Activated CD4-positive, alpha-beta T cell treated with anti-CD3 and anti-CD28 coated beads, Interleukin-2, amount 10 ng/mL, durations not matched to agents 7 days and 5 days (primary cell): ENCODE measurements at regions of chr15 and their contacts with region 1.

Region 1: DNA sequence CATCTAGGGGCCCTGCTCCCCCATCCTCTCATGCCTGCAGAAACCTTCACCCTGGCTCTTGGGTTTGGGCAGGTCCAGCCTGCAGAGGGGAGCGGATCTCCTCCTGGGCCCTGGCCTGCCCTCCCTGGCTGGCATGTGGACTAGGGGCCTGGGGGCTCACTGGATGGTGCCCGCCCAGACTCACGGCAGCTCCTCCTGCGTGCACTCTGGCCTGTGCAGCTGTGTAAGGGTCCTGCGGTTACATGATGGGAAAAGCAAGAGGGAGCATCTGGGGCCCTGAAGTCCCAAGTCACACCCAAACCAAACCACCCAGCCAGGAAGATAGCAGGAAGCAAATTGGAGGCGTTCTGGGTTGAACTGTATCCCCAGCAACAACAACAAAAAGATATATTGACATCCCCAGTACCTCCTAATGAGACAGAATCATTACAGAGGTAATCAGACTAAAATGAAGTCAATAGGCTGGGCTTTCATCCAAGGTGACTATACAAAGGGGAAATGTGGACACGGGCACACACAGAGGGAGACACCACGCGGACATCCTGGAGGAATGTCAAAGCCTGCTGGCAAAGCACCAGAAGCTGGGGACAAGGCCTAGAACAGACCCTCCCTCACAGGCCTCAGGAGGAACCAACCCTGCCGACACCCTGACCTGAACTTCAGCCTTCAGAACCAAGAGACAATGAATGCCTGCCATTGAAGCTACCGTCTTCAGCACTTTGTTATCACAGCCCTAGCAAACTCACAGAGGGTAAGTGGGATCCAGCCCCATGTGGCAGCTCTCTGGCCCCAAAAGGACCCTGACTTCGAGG is 10.4 kb upstream of the CLK3 start:
- DNase-seq: no peak
- H3K4me3 Mint-ChIP-seq: no peak overlapping the region
- H3K27ac Mint-ChIP-seq: no peak overlapping the region
- H3K4me1 Mint-ChIP-seq: no peaks in the 10 kb centered on the region
- H3K27me3 Mint-ChIP-seq: no peaks in the 10 kb centered on the region

Region 2: GRCh38 chr15:74615508-74616365 is 10.5 kb after region 1 on chr15 and contains the start of gene CLK3:
- CTCF ChIA-PET with region 1: interaction called, 19 read pairs
- POLR2A ChIA-PET with region 1: no interaction called
- DNase-seq: peak; percentile 95
- H3K4me3 Mint-ChIP-seq: peak within 1 kb of the TSS; percentile 85
- H3K27ac Mint-ChIP-seq: peak within 1 kb of the TSS; percentile 96
- H3K4me1 Mint-ChIP-seq: peaks cover 52% of the 10 kb centered on the region
- H3K27me3 Mint-ChIP-seq: no peaks in the 10 kb centered on the region
- total RNA-seq, gene CLK3: 126 to 134 TPM